CD14-positive monocyte (primary cell): ENCODE measurements at regions of chr16 and their contacts with region 1.

Region 1: DNA sequence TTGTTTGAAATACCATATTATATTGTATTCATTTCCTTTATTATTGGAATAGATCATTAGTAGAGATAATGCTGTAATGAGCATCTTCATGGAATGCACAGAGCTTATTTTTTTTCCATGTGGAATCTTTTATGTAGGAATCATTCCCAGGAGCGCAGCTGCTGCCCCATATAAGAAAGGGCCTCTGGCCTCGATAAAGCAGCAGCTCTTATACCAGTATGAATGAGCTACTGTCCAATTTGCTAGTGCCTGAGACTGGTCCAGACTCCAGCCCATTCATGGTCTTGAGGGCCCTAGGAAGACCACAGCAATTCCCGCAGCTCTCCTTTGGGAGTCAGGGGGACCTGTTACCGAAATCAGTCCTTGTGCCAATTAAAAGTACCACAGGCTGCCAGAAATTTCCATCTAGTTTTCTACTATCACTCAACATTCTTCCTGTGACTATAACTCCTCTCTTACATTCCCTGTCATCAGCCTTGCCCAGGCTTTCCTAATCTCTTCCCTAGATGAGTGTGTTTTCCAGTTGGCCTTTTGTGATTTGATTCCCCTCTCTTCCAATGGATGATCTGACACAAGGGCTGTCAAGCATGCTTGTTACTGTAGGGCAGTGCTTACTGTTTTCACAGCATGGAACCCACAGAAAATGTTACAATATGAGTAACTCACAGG is 1.9 kb downstream of the ZNF843 start:
- DNase-seq: no peak
- H3K4me3 ChIP-seq: no peak overlapping the region
- H3K4me3 Mint-ChIP-seq: no peak overlapping the region
- H3K27ac ChIP-seq: no peak overlapping the region
- H3K27ac Mint-ChIP-seq: no peak overlapping the region
- H3K4me1 ChIP-seq: peaks cover 0 to 4% of the 10 kb centered on the region in 2 donors
- H3K4me1 Mint-ChIP-seq: peaks cover 6% of the 10 kb centered on the region
- H3K27me3 ChIP-seq: no peaks in the 10 kb centered on the region
- H3K27me3 Mint-ChIP-seq: peaks cover 2 to 10% (median 4%) of the 10 kb centered on the region in 3 donors
- CTCF ChIP-seq: no peak

Region 2: DNA sequence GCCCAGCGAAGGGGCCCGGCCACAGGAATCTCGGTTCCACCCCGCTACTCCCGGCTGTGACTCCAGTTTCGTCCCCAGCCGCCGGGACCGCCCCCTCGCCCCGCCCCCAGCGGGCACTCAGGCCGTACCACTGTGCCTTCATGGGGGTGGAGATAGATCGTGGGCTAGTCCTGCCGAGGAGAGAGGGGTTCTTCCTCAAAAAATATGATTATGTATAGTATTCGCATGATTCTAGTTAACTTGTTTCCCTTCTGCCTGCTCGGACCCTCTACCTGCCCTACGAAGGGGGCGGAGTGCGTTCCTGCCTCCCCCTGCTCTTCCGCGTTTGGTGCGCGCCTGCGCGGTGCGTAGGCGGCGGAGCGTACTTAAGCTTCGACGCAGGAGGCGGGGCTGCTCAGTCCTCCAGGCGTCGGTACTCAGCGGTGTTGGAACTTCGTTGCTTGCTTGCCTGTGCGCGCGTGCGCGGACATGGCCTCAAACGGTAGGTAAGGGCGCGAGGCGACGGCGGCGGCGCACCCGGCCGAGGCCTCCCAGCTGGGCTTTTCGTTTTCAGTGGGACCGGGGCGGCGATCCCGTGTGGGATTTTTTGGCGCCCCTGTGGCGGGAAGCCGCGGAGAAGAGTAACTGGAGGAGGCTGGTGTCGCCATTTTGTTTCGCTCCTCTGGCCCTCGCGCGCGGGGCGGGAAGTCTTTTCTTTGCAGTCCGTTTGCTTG is 260.7 kb before region 1 on chr16 and contains the start of gene FUS:
- intact Hi-C with region 1: loop called in 1 of 2 experiments (anchors 10 kb)
- DNase-seq: peak; percentile 91 to 96 (median 94)
- H3K4me3 ChIP-seq: peak within 1 kb of the TSS; percentile 71 to 98 (median 95)
- H3K4me3 Mint-ChIP-seq: peak within 1 kb of the TSS; percentile 93 to 94
- H3K27ac ChIP-seq: peak within 1 kb of the TSS; percentile 88 to 95
- H3K27ac Mint-ChIP-seq: peak within 1 kb of the TSS; percentile 97 to 100 (median 99)
- H3K4me1 ChIP-seq: peaks cover 36 to 46% of the 10 kb centered on the region in 2 donors
- H3K4me1 Mint-ChIP-seq: peaks cover 49% of the 10 kb centered on the region
- H3K27me3 ChIP-seq: no peaks in the 10 kb centered on the region
- H3K27me3 Mint-ChIP-seq: peaks cover 2 to 6% (median 4%) of the 10 kb centered on the region in 3 donors
- CTCF ChIP-seq: no peak
- polyA plus RNA-seq, gene FUS: 54.9 to 246 (median 78.5) TPM

Region 3: GRCh38 chr16:31382485-31383161 is 58.0 kb before region 1 on chr16:
- intact Hi-C with region 1: loop called in 1 of 2 experiments (anchors 10 kb)
- DNase-seq: peak; percentile 71 to 75 (median 71)
- H3K4me3 ChIP-seq: no peak overlapping the region
- H3K4me3 Mint-ChIP-seq: no peak overlapping the region
- H3K27ac ChIP-seq: peak overlapping the region in 1 of 2 donors; percentile 15
- H3K27ac Mint-ChIP-seq: peak overlapping the region in 3 of 7 donors; percentile 33 to 66 (median 48)
- H3K4me1 ChIP-seq: peaks cover 0 to 6% of the 10 kb centered on the region in 2 donors
- H3K4me1 Mint-ChIP-seq: peaks cover 14% of the 10 kb centered on the region
- H3K27me3 ChIP-seq: no peaks in the 10 kb centered on the region
- H3K27me3 Mint-ChIP-seq: peaks cover 0 to 5% (median 1%) of the 10 kb centered on the region in 3 donors
- CTCF ChIP-seq: peak; percentile 88

Region 4: GRCh38 chr16:31734265-31734664 is 293.6 kb after region 1 on chr16:
- intact Hi-C with region 1: no loop called
- DNase-seq: no peak
- H3K4me3 ChIP-seq: no peak overlapping the region
- H3K4me3 Mint-ChIP-seq: no peak overlapping the region
- H3K27ac ChIP-seq: no peak overlapping the region
- H3K27ac Mint-ChIP-seq: no peak overlapping the region
- H3K4me1 ChIP-seq: no peaks in the 10 kb centered on the region
- H3K4me1 Mint-ChIP-seq: no peaks in the 10 kb centered on the region
- H3K27me3 ChIP-seq: no peaks in the 10 kb centered on the region
- H3K27me3 Mint-ChIP-seq: no peaks in the 10 kb centered on the region
- CTCF ChIP-seq: no peak